HEK293 (cell line): ENCODE measurements at regions of chr11 and their contacts with region 1.

Region 1: GRCh38 chr11:6812390-6813005 is 13.0 kb upstream of the OR6A2 start:
- H3K4me3 ChIP-seq: no peak overlapping the region
- H3K27ac ChIP-seq: no peak overlapping the region
- H3K4me1 ChIP-seq: no peaks in the 10 kb centered on the region
- CTCF ChIP-seq: no peak; the same call in 1 of the 2 replicates

Region 2: GRCh38 chr11:6799402-6799801 is 13.1 kb before region 1 on chr11 and contains the start of gene OR6A2:
- CTCF ChIA-PET with region 1: interaction called, 12 read pairs
- POLR2A ChIA-PET with region 1: no interaction called
- H3K4me3 ChIP-seq: no peak within 1 kb of the TSS
- H3K27ac ChIP-seq: no peak within 1 kb of the TSS
- H3K4me1 ChIP-seq: no peaks in the 10 kb centered on the region
- CTCF ChIP-seq: no peak

Region 3: DNA sequence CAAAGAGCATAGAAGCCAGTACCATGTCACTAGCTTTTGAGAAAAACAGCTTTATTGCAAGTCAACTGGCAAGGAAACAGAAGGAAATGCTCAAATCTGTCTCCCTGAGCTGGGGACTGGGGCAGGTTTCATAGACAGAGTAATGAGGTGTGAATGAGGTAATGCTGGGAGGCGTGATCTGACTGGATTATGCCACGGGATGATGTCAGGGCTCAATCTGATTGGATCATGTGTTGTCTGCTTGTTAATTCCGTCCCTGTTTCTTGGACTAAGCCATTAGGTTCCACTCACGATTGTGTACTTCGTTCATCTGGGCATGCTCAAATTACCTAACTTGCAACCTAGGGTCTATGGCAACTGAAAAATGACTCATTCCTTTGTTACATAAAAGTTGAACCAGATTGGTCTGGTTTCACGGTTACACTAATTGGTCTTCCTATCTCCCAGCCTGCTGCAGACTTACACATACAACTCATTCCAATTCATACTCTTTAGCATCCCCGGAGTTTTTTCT is 12.8 kb after region 1 on chr11:
- CTCF ChIA-PET with region 1: interaction called, 13 read pairs
- POLR2A ChIA-PET with region 1: interaction called, 3 read pairs
- H3K4me3 ChIP-seq: no peak overlapping the region
- H3K27ac ChIP-seq: no peak overlapping the region
- H3K4me1 ChIP-seq: no peaks in the 10 kb centered on the region
- CTCF ChIP-seq: no peak

Region 4: GRCh38 chr11:6862961-6863360 is 50.5 kb after region 1 on chr11 and contains the start of gene OR10A2:
- CTCF ChIA-PET with region 1: interaction called, 12 read pairs
- POLR2A ChIA-PET with region 1: no interaction called
- H3K4me3 ChIP-seq: no peak within 1 kb of the TSS
- H3K27ac ChIP-seq: no peak within 1 kb of the TSS
- H3K4me1 ChIP-seq: no peaks in the 10 kb centered on the region
- CTCF ChIP-seq: no peak